Natural killer cell (primary cell): ENCODE measurements at regions of chr14 and their contacts with region 1.

Region 1: DNA sequence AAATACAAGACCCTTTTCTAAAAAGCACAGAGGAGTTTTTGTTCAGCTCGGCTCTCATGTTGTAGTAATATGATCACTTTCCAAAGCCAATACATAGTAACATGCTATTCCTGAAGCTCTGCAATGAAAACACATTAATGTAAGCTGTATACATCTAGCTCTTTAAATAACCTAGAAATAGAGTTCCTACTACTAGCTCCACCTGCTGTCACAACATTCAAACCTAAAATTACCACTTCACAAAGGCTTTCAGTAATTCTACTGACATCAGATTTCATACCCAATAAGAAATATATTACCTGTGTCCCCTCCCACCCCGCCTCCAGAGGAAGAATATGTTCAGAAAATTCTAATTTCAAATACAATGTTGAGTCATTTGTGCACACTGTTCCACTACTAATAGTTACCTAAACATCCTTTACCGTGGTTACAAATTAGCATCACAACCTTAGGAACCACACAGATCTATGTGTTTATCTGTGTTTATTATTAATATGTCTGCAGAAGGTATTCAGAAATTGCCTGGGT is 17.8 kb downstream of the EFCAB11 start:
- DNase-seq: no peak
- ATAC-seq: no peak
- H3K4me3 ChIP-seq: no peak overlapping the region
- H3K4me3 Mint-ChIP-seq: no peak overlapping the region
- H3K27ac ChIP-seq: no peak overlapping the region
- H3K27ac Mint-ChIP-seq: no peak overlapping the region
- H3K4me1 ChIP-seq: no peaks in the 10 kb centered on the region
- H3K4me1 Mint-ChIP-seq: no peaks in the 10 kb centered on the region
- H3K27me3 ChIP-seq: no peaks in the 10 kb centered on the region
- H3K27me3 Mint-ChIP-seq: no peaks in the 10 kb centered on the region
- CTCF ChIP-seq: no peak

Region 2: GRCh38 chr14:89922031-89922907 is 14.5 kb before region 1 on chr14:
- intact Hi-C with region 1: no loop called
- DNase-seq: no peak
- ATAC-seq: peak; percentile 43 to 74 (median 55)
- H3K4me3 ChIP-seq: no peak overlapping the region
- H3K4me3 Mint-ChIP-seq: peak overlapping the region; percentile 35
- H3K27ac ChIP-seq: no peak overlapping the region
- H3K27ac Mint-ChIP-seq: peak overlapping the region; percentile 42 to 52
- H3K4me1 ChIP-seq: peaks cover 3% of the 10 kb centered on the region
- H3K4me1 Mint-ChIP-seq: peaks cover 17 to 19% of the 10 kb centered on the region in 2 donors
- H3K27me3 ChIP-seq: no peaks in the 10 kb centered on the region
- H3K27me3 Mint-ChIP-seq: no peaks in the 10 kb centered on the region
- CTCF ChIP-seq: no peak

Region 3: GRCh38 chr14:89973234-89973823 is 36.6 kb after region 1 on chr14:
- intact Hi-C with region 1: loop called (anchors 1 kb)
- DNase-seq: peak; percentile 30 to 68
- ATAC-seq: peak; percentile 62 to 66 (median 65)
- H3K4me3 ChIP-seq: no peak overlapping the region
- H3K4me3 Mint-ChIP-seq: no peak overlapping the region
- H3K27ac ChIP-seq: no peak overlapping the region
- H3K27ac Mint-ChIP-seq: no peak overlapping the region
- H3K4me1 ChIP-seq: no peaks in the 10 kb centered on the region
- H3K4me1 Mint-ChIP-seq: peaks cover 0 to 4% of the 10 kb centered on the region in 2 donors
- H3K27me3 ChIP-seq: no peaks in the 10 kb centered on the region
- H3K27me3 Mint-ChIP-seq: no peaks in the 10 kb centered on the region
- CTCF ChIP-seq: peak; percentile 79